Heart left ventricle (tissue), 16 donors: ENCODE measurements at regions of chr11 and their contacts with region 1.

Region 1: GRCh38 chr11:126355324-126355925 is at the start of gene ST3GAL4:
- DNase-seq: peak; percentile 90 to 95 (median 91)
- ATAC-seq: peak; percentile 75 to 85 (median 83)
- H3K4me3 ChIP-seq: peak within 1 kb of the TSS; percentile 50 to 97 (median 71)
- H3K27ac ChIP-seq: peak within 1 kb of the TSS; percentile 69 to 94 (median 84)
- H3K4me1 ChIP-seq: peaks cover 7 to 90% (median 75%) of the 10 kb centered on the region in 12 donors
- H3K27me3 ChIP-seq: no peaks in the 10 kb centered on the region
- CTCF ChIP-seq: no peak
- POLR2A ChIP-seq: no peak
- total RNA-seq, gene ST3GAL4: 30.6 to 88.5 (median 59.8) TPM

Region 2: GRCh38 chr11:126318574-126319373 is 36.7 kb before region 1 on chr11:
- intact Hi-C with region 1: loop called in 5 of 10 experiments (anchors 5 kb)
- DNase-seq: peak in 4 of 5 donors; percentile 59 to 73 (median 62)
- ATAC-seq: peak; percentile 60 to 89 (median 86)
- H3K4me3 ChIP-seq: peak overlapping the region in 6 of 12 donors; percentile 3 to 44 (median 22)
- H3K27ac ChIP-seq: peak overlapping the region; percentile 73 to 93 (median 82)
- H3K4me1 ChIP-seq: peaks cover 7 to 45% (median 27%) of the 10 kb centered on the region in 12 donors
- H3K27me3 ChIP-seq: no peaks in the 10 kb centered on the region
- CTCF ChIP-seq: no peak
- POLR2A ChIP-seq: peak in 1 of 2 donors; percentile 19

Region 3: DNA sequence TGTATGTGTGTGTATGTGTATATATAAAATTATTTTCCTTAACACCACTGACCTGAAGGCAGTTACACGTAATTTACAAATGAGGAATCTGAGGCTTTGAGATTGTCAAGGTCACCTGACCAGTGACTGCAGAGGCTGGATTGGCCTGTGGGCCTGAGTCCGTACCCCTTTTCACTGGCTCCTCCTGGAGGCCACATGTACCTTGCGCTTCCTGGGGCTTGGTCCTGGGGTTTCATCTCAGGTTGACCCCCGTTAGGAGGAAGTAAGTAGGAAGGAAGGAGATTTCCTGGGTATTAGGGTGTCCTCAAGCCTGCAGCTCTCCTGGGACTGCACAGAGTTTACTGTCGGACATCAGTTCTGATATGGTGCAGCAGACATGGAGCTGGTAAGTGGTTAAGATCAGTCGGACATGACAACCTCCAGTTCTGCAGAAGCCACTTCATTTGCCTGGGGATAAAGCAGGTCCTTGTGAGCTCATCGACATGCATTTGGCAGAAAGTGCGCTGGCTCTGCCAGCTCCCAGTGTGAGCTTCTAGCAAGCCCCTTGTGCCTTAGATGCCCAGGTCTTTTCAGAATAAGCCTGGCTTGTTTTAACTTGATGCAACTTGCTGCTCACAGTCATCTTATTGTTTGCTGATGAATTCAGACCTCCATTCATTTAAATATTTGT is 36.7 kb after region 1 on chr11:
- intact Hi-C with region 1: loop called in 5 of 10 experiments (anchors 2 to 5 kb)
- DNase-seq: peak in 3 of 5 donors; percentile 54 to 74 (median 68)
- ATAC-seq: peak; percentile 29 to 70 (median 54)
- H3K4me3 ChIP-seq: no peak overlapping the region
- H3K27ac ChIP-seq: peak overlapping the region; percentile 47 to 93 (median 74)
- H3K4me1 ChIP-seq: peaks cover 12 to 74% (median 49%) of the 10 kb centered on the region in 12 donors
- H3K27me3 ChIP-seq: no peaks in the 10 kb centered on the region
- CTCF ChIP-seq: peak in 7 of 12 donors; percentile 14 to 53 (median 28)
- POLR2A ChIP-seq: no peak

Region 4: GRCh38 chr11:126403658-126404057 is 48.2 kb after region 1 on chr11:
- intact Hi-C with region 1: loop called in 1 of 10 experiments (anchors 10 kb)
- DNase-seq: no peak
- ATAC-seq: peak in 1 of 4 donors; percentile 21
- H3K4me3 ChIP-seq: no peak overlapping the region
- H3K27ac ChIP-seq: no peak overlapping the region
- H3K4me1 ChIP-seq: peaks cover 0 to 58% (median 11%) of the 10 kb centered on the region in 12 donors
- H3K27me3 ChIP-seq: no peaks in the 10 kb centered on the region
- CTCF ChIP-seq: no peak
- POLR2A ChIP-seq: no peak

Region 5: DNA sequence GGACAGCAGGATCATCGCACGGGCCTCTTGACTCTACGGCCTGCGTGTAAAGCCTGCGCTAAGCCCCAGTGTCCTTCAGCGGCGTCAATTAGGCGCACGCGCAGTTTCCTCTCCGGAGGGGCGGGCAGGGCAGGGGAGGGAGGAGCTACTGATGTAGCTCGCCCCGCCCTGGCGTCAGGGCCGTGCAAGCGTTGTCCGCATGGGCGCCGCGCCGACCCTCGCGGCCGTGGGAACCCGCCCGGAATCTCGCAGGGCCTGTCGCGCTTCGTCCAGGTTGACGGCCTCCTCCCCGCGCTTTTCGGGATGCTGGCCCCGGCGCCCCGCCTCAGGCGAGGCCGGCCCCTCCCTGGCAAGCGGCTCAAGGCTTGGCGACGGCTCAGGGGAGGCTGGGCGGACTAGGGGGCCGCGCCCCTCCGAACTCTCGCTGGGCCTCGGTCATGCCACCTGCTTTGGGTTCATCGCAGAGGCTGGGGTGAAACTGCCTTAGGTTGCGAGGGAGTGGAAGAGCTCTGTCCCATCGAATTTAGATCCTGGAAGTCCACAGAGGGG is 61.2 kb after region 1 on chr11:
- intact Hi-C with region 1: loop called in 7 of 10 experiments (anchors 2 to 5 kb)
- DNase-seq: peak; percentile 90 to 96 (median 93)
- ATAC-seq: peak; percentile 69 to 88 (median 84)
- H3K4me3 ChIP-seq: peak overlapping the region in 11 of 12 donors; percentile 16 to 61 (median 49)
- H3K27ac ChIP-seq: peak overlapping the region; percentile 69 to 93 (median 86)
- H3K4me1 ChIP-seq: peaks cover 3 to 80% (median 61%) of the 10 kb centered on the region in 12 donors
- H3K27me3 ChIP-seq: no peaks in the 10 kb centered on the region
- CTCF ChIP-seq: no peak
- POLR2A ChIP-seq: peak in 1 of 2 donors; percentile 62